BJ (cell line): ENCODE measurements at regions of chr2 and their contacts with region 1.

Region 1: GRCh38 chr2:28096421-28096820 is 205.9 kb downstream of the BABAM2 start:
- DNase-seq: no peak
- H3K4me3 ChIP-seq: no peak overlapping the region
- H3K27me3 ChIP-seq: no peaks in the 10 kb centered on the region
- CTCF ChIP-seq: no peak

Region 2: GRCh38 chr2:28084564-28084963 is 11.9 kb before region 1 on chr2:
- CTCF ChIA-PET with region 1: interaction called, 13 read pairs
- POLR2A ChIA-PET with region 1: no interaction called
- DNase-seq: no peak
- H3K4me3 ChIP-seq: no peak overlapping the region
- H3K27me3 ChIP-seq: no peaks in the 10 kb centered on the region
- CTCF ChIP-seq: no peak